HepG2 (cell line): ENCODE measurements at regions of chr6 and their contacts with region 1.

Region 1: GRCh38 chr6:41920921-41921711 is at the starts of genes BYSL and MED20:
- DNase-seq: peak; percentile 92
- ATAC-seq: peak; percentile 91
- H3K4me3 ChIP-seq: peak within 1 kb of the TSS; percentile 80 to 93 (median 86)
- H3K27ac ChIP-seq: peak within 1 kb of the TSS; percentile 96
- H3K4me1 ChIP-seq: peaks cover 41% of the 10 kb centered on the region
- H3K27me3 ChIP-seq: no peaks in the 10 kb centered on the region; a peak in 1 of 5 replicates
- CTCF ChIP-seq: peak; percentile 96
- EP300 ChIP-seq: no peak; a peak in 1 of 4 replicates
- POLR2A ChIP-seq: peak; percentile 77 to 89
- RAD21 ChIP-seq: no peak; the same call in 1 of the 2 replicates
- total RNA-seq, gene BYSL: 27.9 and 37.3 TPM in 2 replicates
- total RNA-seq, gene MED20: 41.1 and 56.3 TPM in 2 replicates

Region 2: GRCh38 chr6:41735427-41736356 is 185.4 kb before region 1 on chr6 and contains the start of gene TFEB:
- CTCF ChIA-PET with region 1: no interaction called
- POLR2A ChIA-PET with region 1: no interaction called
- in situ Hi-C with region 1: no loop called
- intact Hi-C with region 1: loop called (anchors 1 kb)
- DNase-seq: peak; percentile 90
- ATAC-seq: peak; percentile 60
- H3K4me3 ChIP-seq: peak within 1 kb of the TSS; percentile 51 to 83 (median 76)
- H3K27ac ChIP-seq: peak within 1 kb of the TSS; percentile 57
- H3K4me1 ChIP-seq: peaks cover 65% of the 10 kb centered on the region
- H3K27me3 ChIP-seq: no peaks in the 10 kb centered on the region; a peak in 1 of 5 replicates
- CTCF ChIP-seq: peak; percentile 94
- EP300 ChIP-seq: peak in 1 of 2 experiments; percentile 57; a peak in 2 of 4 replicates
- POLR2A ChIP-seq: no peak
- RAD21 ChIP-seq: peak; percentile 99
- total RNA-seq, gene TFEB: 12.8 and 13.3 TPM in 2 replicates

Region 3: GRCh38 chr6:41756354-41756753 is 164.8 kb before region 1 on chr6:
- CTCF ChIA-PET with region 1: no interaction called
- POLR2A ChIA-PET with region 1: no interaction called
- in situ Hi-C with region 1: no loop called
- intact Hi-C with region 1: no loop called
- DNase-seq: no peak
- ATAC-seq: peak; percentile 75
- H3K4me3 ChIP-seq: peak overlapping the region in 1 of 3 experiments; percentile 0; a peak in 1 of 6 replicates
- H3K27ac ChIP-seq: no peak overlapping the region
- H3K4me1 ChIP-seq: peaks cover 71% of the 10 kb centered on the region
- H3K27me3 ChIP-seq: no peaks in the 10 kb centered on the region
- CTCF ChIP-seq: no peak; the same call in 1 of the 2 replicates
- EP300 ChIP-seq: no peak
- POLR2A ChIP-seq: no peak
- RAD21 ChIP-seq: 0 out of 2 replicates have a peak, but pooled peaks have one; percentile 16

Region 4: DNA sequence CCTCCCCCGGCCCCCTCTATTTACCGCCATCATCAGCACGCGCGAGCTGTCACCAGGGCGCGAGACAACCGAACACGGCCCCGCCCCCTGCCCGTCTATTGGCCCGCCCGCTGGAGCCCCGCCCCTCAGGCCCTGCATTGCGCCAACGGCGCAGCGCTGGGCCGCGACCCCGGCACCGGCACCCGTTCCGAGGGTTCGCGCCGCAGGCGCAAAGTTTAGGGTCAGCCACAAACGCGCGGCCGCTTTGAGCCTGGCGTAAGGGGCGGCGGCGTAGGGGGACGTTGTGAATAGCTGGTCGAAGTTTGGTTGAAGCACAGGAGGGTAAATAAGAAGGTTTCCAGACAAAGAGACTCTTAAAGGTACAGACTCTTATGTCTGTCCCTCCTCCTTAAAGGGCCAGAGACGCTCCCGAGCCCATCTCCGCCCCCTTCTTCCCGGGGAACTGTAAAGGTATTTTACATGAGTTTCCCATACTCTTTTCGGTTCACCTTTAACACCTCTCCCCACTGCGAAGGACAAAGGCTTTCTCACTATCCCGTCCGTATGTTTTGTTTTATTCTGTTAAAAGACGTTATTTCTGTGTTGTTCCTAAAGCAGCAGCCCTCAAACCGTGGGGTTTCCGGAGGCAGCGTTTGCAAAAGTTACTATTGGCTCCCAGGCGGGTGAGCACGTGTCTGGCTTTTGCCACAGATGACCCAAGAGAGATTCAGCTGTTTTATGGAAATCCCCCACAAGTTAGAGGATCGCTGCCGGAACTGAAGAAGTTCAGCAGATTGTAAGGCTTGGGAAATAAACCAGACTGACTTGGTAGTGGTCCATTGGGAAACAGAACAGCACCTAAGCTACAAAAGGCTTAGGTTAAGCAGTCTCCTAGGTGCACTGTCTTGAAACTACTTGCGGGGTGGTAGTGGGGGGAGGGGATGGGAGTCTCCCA is 25.5 kb before region 1 on chr6 and contains the start of gene USP49:
- CTCF ChIA-PET with region 1: no interaction called
- POLR2A ChIA-PET with region 1: interaction called, 30 read pairs
- in situ Hi-C with region 1: no loop called
- intact Hi-C with region 1: loop called (anchors 1 kb)
- DNase-seq: peak; percentile 78
- ATAC-seq: peak; percentile 94
- H3K4me3 ChIP-seq: peak within 1 kb of the TSS; percentile 79 to 81 (median 79)
- H3K27ac ChIP-seq: peak within 1 kb of the TSS; percentile 57
- H3K4me1 ChIP-seq: peaks cover 30% of the 10 kb centered on the region
- H3K27me3 ChIP-seq: no peaks in the 10 kb centered on the region; a peak in 1 of 5 replicates
- CTCF ChIP-seq: no peak
- EP300 ChIP-seq: no peak
- POLR2A ChIP-seq: no peak
- RAD21 ChIP-seq: no peak
- total RNA-seq, gene USP49: 2.9 TPM in 2 replicates

Region 5: GRCh38 chr6:41941280-41942066 is 20.4 kb after region 1 on chr6 and contains the start of gene CCND3:
- CTCF ChIA-PET with region 1: no interaction called
- POLR2A ChIA-PET with region 1: interaction called, 45 read pairs
- in situ Hi-C with region 1: no loop called
- intact Hi-C with region 1: loop called (anchors 1 kb)
- DNase-seq: peak; percentile 85
- ATAC-seq: peak; percentile 86
- H3K4me3 ChIP-seq: peak within 1 kb of the TSS; percentile 74 to 91 (median 75)
- H3K27ac ChIP-seq: no peak within 1 kb of the TSS
- H3K4me1 ChIP-seq: peaks cover 31% of the 10 kb centered on the region
- H3K27me3 ChIP-seq: no peaks in the 10 kb centered on the region
- CTCF ChIP-seq: no peak
- EP300 ChIP-seq: 0 out of 4 replicates have a peak, but pooled peaks of 1 of the 2 experiments have one; percentile 34
- POLR2A ChIP-seq: peak; percentile 49 to 50; a peak in 3 of 4 replicates
- RAD21 ChIP-seq: no peak
- total RNA-seq, gene CCND3: 6.9 and 7.2 TPM in 2 replicates

Region 6: GRCh38 chr6:42217519-42218367 is 296.6 kb after region 1 on chr6 and contains the start of gene MRPS10:
- CTCF ChIA-PET with region 1: no interaction called
- POLR2A ChIA-PET with region 1: no interaction called
- in situ Hi-C with region 1: no loop called
- intact Hi-C with region 1: loop called (anchors 1 kb)
- DNase-seq: peak; percentile 97
- ATAC-seq: peak; percentile 98
- H3K4me3 ChIP-seq: peak within 1 kb of the TSS; percentile 69 to 100 (median 84)
- H3K27ac ChIP-seq: peak within 1 kb of the TSS; percentile 83
- H3K4me1 ChIP-seq: peaks cover 49% of the 10 kb centered on the region
- H3K27me3 ChIP-seq: no peaks in the 10 kb centered on the region; a peak in 1 of 5 replicates
- CTCF ChIP-seq: peak; percentile 37; the same call in 1 of the 2 replicates
- EP300 ChIP-seq: peak in 1 of 2 experiments; percentile 33; a peak in 1 of 4 replicates
- POLR2A ChIP-seq: peak; percentile 89 to 96
- RAD21 ChIP-seq: 0 out of 2 replicates have a peak, but pooled peaks have one; percentile 18
- total RNA-seq, gene MRPS10: 54.6 and 79.2 TPM in 2 replicates